Activated naive CD4-positive, alpha-beta T cell treated with anti-CD3 and anti-CD28 coated beads for 36 hours (primary cell): ENCODE measurements at regions of chr1 and their contacts with region 1.

Region 1: GRCh38 chr1:77900687-77901293 is 12.4 kb downstream of the NEXN start:
- DNase-seq: peak; percentile 40
- H3K4me3 Mint-ChIP-seq: no peak overlapping the region
- H3K27ac Mint-ChIP-seq: no peak overlapping the region
- H3K4me1 Mint-ChIP-seq: no peaks in the 10 kb centered on the region
- H3K27me3 Mint-ChIP-seq: peaks cover 2% of the 10 kb centered on the region

Region 2: DNA sequence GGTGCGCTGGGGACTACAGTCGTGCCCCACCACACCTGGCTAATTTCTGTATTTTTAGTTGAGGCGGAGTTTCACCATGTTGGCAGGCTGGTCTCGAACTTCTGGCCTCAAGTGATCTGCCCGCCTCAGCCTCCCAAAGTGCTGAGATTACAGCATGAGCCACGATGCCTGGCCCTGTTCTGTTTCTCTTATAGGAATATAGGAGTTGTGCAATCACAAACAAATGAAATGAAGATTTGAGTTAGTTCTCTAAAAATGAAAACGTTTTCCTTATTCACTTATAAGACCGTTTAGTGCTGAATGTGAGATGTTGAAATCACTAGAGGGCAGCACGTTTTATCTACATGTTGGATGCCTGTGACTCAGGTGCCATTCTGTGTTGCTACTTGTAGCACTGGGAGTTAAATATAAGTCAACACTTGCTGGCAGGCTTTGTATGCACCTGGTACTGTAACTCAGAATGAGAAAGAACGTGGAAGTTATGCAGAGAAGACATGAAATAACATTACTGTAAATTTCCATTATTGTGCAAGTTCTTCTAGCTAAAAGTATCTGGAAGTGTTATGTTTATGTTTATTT is 75.6 kb before region 1 on chr1:
- CTCF ChIA-PET with region 1: interaction called, 7 read pairs
- intact Hi-C with region 1: loop called (anchors 1 kb)
- DNase-seq: peak; percentile 42
- H3K4me3 Mint-ChIP-seq: no peak overlapping the region
- H3K27ac Mint-ChIP-seq: no peak overlapping the region
- H3K4me1 Mint-ChIP-seq: no peaks in the 10 kb centered on the region
- H3K27me3 Mint-ChIP-seq: no peaks in the 10 kb centered on the region

Region 3: DNA sequence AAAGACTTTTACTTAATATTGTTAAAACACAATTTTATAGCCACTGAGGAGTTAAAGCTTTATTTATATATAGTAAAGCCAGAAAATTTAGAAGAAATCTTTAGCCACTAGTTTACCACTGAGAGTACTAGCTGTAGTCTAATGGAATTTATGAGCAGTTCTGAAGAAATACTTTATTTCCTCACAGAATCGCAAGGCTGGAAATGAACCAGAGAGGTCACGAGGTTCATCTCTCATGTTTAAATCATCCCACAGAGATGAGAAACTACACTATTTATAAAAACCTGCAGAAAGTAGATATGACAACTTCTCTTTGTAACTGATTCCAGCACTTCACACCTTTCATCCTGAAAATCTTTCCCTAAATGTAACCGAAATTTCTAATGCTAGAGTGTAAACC is 1079.7 kb after region 1 on chr1:
- CTCF ChIA-PET with region 1: no interaction called
- intact Hi-C with region 1: no loop called
- DNase-seq: no peak
- H3K4me3 Mint-ChIP-seq: no peak overlapping the region
- H3K27ac Mint-ChIP-seq: no peak overlapping the region
- H3K4me1 Mint-ChIP-seq: no peaks in the 10 kb centered on the region
- H3K27me3 Mint-ChIP-seq: no peaks in the 10 kb centered on the region